ENCODE measurements at regions of chr5 and their contacts with region 1.

Region 1: GRCh38 chr5:51382763-51383490 is at the start of gene ISL1:
- DNase-seq: peak; percentile 77 to 84
- H3K4me3 ChIP-seq: peak within 1 kb of the TSS; percentile 45
- H3K4me3 Mint-ChIP-seq: peak within 1 kb of the TSS; percentile 83
- H3K27ac Mint-ChIP-seq: peak within 1 kb of the TSS; percentile 35
- H3K4me1 ChIP-seq: no peaks in the 10 kb centered on the region
- H3K4me1 Mint-ChIP-seq: no peaks in the 10 kb centered on the region
- H3K27me3 ChIP-seq: no peaks in the 10 kb centered on the region; the same call in 1 of the 2 replicates
- H3K27me3 Mint-ChIP-seq: peaks cover 23% of the 10 kb centered on the region
- CTCF ChIP-seq: no peak
- total RNA-seq, gene ISL1: 0.29 and 0.88 TPM in 2 replicates

Region 2: GRCh38 chr5:51398875-51399642 is 16.1 kb after region 1 on chr5:
- CTCF ChIA-PET with region 1: no interaction called
- POLR2A ChIA-PET with region 1: no interaction called
- intact Hi-C with region 1: loop called (anchors 2 kb)
- DNase-seq: no peak
- H3K4me3 ChIP-seq: no peak overlapping the region; the same call in 1 of the 2 replicates
- H3K4me3 Mint-ChIP-seq: peak overlapping the region; percentile 62
- H3K27ac Mint-ChIP-seq: no peak overlapping the region
- H3K4me1 ChIP-seq: no peaks in the 10 kb centered on the region
- H3K4me1 Mint-ChIP-seq: no peaks in the 10 kb centered on the region
- H3K27me3 ChIP-seq: 0 out of 2 replicates have a peak, but pooled peaks cover 2% of the 10 kb centered on the region
- H3K27me3 Mint-ChIP-seq: peaks cover 21% of the 10 kb centered on the region
- CTCF ChIP-seq: no peak

Region 3: GRCh38 chr5:51416149-51416548 is 33.2 kb after region 1 on chr5:
- CTCF ChIA-PET with region 1: no interaction called
- POLR2A ChIA-PET with region 1: no interaction called
- intact Hi-C with region 1: loop called (anchors 1 kb)
- DNase-seq: no peak
- H3K4me3 ChIP-seq: no peak overlapping the region
- H3K4me3 Mint-ChIP-seq: no peak overlapping the region
- H3K27ac Mint-ChIP-seq: no peak overlapping the region
- H3K4me1 ChIP-seq: no peaks in the 10 kb centered on the region
- H3K4me1 Mint-ChIP-seq: no peaks in the 10 kb centered on the region
- H3K27me3 ChIP-seq: no peaks in the 10 kb centered on the region
- H3K27me3 Mint-ChIP-seq: no peaks in the 10 kb centered on the region
- CTCF ChIP-seq: peak in 1 of 2 experiments; percentile 5

Region 4: GRCh38 chr5:51960617-51961115 is 577.7 kb after region 1 on chr5:
- CTCF ChIA-PET with region 1: no interaction called
- POLR2A ChIA-PET with region 1: no interaction called
- intact Hi-C with region 1: loop called (anchors 5 kb)
- DNase-seq: no peak
- H3K4me3 ChIP-seq: no peak overlapping the region
- H3K4me3 Mint-ChIP-seq: no peak overlapping the region
- H3K27ac Mint-ChIP-seq: no peak overlapping the region
- H3K4me1 ChIP-seq: no peaks in the 10 kb centered on the region
- H3K4me1 Mint-ChIP-seq: no peaks in the 10 kb centered on the region
- H3K27me3 ChIP-seq: no peaks in the 10 kb centered on the region
- H3K27me3 Mint-ChIP-seq: no peaks in the 10 kb centered on the region
- CTCF ChIP-seq: peak; percentile 38 to 45

Region 5: GRCh38 chr5:52007230-52007858 is 624.4 kb after region 1 on chr5:
- CTCF ChIA-PET with region 1: no interaction called
- POLR2A ChIA-PET with region 1: no interaction called
- intact Hi-C with region 1: loop called (anchors 1 kb)
- DNase-seq: peak; percentile 42 to 49
- H3K4me3 ChIP-seq: no peak overlapping the region
- H3K4me3 Mint-ChIP-seq: no peak overlapping the region
- H3K27ac Mint-ChIP-seq: no peak overlapping the region
- H3K4me1 ChIP-seq: no peaks in the 10 kb centered on the region
- H3K4me1 Mint-ChIP-seq: no peaks in the 10 kb centered on the region
- H3K27me3 ChIP-seq: no peaks in the 10 kb centered on the region
- H3K27me3 Mint-ChIP-seq: no peaks in the 10 kb centered on the region
- CTCF ChIP-seq: peak; percentile 67 to 81

Region 6: GRCh38 chr5:52657247-52657645 is 1274.3 kb after region 1 on chr5:
- CTCF ChIA-PET with region 1: no interaction called
- POLR2A ChIA-PET with region 1: no interaction called
- intact Hi-C with region 1: loop called (anchors 10 kb)
- DNase-seq: peak in 1 of 2 experiments; percentile 17
- H3K4me3 ChIP-seq: no peak overlapping the region
- H3K4me3 Mint-ChIP-seq: no peak overlapping the region
- H3K27ac Mint-ChIP-seq: no peak overlapping the region
- H3K4me1 ChIP-seq: no peaks in the 10 kb centered on the region
- H3K4me1 Mint-ChIP-seq: no peaks in the 10 kb centered on the region
- H3K27me3 ChIP-seq: no peaks in the 10 kb centered on the region
- H3K27me3 Mint-ChIP-seq: no peaks in the 10 kb centered on the region
- CTCF ChIP-seq: peak; percentile 23 to 47

Measured in Caco-2 (cell line).